ENCODE measurements at regions of chr13 and their contacts with region 1.

Region 1: GRCh38 chr13:35014606-35015213 is 72.6 kb downstream of the NBEA start:
- DNase-seq: no peak
- H3K4me3 ChIP-seq: no peak overlapping the region
- H3K27ac ChIP-seq: no peak overlapping the region
- H3K4me1 ChIP-seq: no peaks in the 10 kb centered on the region
- H3K27me3 ChIP-seq: no peaks in the 10 kb centered on the region
- CTCF ChIP-seq: no peak
- POLR2A ChIP-seq: no peak

Region 2: GRCh38 chr13:34637138-34637537 is 377.6 kb before region 1 on chr13:
- intact Hi-C with region 1: no loop called
- DNase-seq: no peak
- H3K4me3 ChIP-seq: no peak overlapping the region
- H3K27ac ChIP-seq: no peak overlapping the region
- H3K4me1 ChIP-seq: no peaks in the 10 kb centered on the region
- H3K27me3 ChIP-seq: no peaks in the 10 kb centered on the region
- CTCF ChIP-seq: no peak
- POLR2A ChIP-seq: no peak

Region 3: GRCh38 chr13:35649162-35649561 is 634.5 kb after region 1 on chr13:
- intact Hi-C with region 1: loop called (anchors 5 kb)
- DNase-seq: no peak
- H3K4me3 ChIP-seq: no peak overlapping the region
- H3K27ac ChIP-seq: no peak overlapping the region
- H3K4me1 ChIP-seq: no peaks in the 10 kb centered on the region
- H3K27me3 ChIP-seq: no peaks in the 10 kb centered on the region
- CTCF ChIP-seq: no peak
- POLR2A ChIP-seq: no peak

Measured in breast epithelium (tissue), 4 donors.